ENCODE measurements at regions of chr7 and their contacts with region 1.

Region 1: GRCh38 chr7:43559171-43559936 is 23.6 kb upstream of the STK17A start:
- DNase-seq: peak; percentile 84
- H3K4me3 Mint-ChIP-seq: peak overlapping the region; percentile 8
- H3K27ac Mint-ChIP-seq: peak overlapping the region; percentile 84
- H3K4me1 Mint-ChIP-seq: peaks cover 58% of the 10 kb centered on the region
- H3K27me3 Mint-ChIP-seq: no peaks in the 10 kb centered on the region
- CTCF ChIP-seq: no peak

Region 2: GRCh38 chr7:42924223-42924838 is 635.0 kb before region 1 on chr7:
- CTCF ChIA-PET with region 1: no interaction called
- POLR2A ChIA-PET with region 1: no interaction called
- intact Hi-C with region 1: no loop called
- DNase-seq: no peak
- H3K4me3 Mint-ChIP-seq: no peak overlapping the region
- H3K27ac Mint-ChIP-seq: no peak overlapping the region
- H3K4me1 Mint-ChIP-seq: peaks cover 31% of the 10 kb centered on the region
- H3K27me3 Mint-ChIP-seq: no peaks in the 10 kb centered on the region
- CTCF ChIP-seq: no peak

Region 3: DNA sequence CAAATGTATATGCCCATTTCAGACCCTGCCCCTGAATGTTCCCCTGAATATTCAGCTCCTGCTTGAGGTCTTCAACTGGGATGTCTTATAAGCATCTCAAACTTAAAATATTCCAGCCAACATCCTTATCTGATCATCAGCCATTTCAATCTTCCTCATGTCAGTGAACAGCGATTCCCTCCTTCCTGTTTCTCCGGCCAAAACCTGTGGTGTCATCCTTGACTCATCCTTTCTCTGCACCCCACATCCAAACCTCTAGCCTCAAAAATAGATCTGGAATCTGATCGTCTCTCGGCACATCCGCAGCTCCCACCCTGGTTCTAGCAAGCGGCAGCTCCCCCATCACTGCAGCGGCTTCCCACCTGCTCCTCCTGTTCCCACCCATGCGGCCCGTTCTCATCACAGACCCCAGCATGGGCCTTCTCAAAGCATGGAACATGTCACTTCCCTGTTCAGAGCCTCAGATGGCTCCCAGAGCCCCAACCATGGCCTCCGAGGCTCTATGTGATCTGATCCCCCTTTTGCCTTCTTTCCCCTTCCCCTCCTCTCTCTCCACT is 281.2 kb before region 1 on chr7:
- CTCF ChIA-PET with region 1: no interaction called
- POLR2A ChIA-PET with region 1: no interaction called
- intact Hi-C with region 1: no loop called
- DNase-seq: peak; percentile 13
- H3K4me3 Mint-ChIP-seq: no peak overlapping the region
- H3K27ac Mint-ChIP-seq: no peak overlapping the region
- H3K4me1 Mint-ChIP-seq: peaks cover 7% of the 10 kb centered on the region
- H3K27me3 Mint-ChIP-seq: no peaks in the 10 kb centered on the region
- CTCF ChIP-seq: no peak

Region 4: DNA sequence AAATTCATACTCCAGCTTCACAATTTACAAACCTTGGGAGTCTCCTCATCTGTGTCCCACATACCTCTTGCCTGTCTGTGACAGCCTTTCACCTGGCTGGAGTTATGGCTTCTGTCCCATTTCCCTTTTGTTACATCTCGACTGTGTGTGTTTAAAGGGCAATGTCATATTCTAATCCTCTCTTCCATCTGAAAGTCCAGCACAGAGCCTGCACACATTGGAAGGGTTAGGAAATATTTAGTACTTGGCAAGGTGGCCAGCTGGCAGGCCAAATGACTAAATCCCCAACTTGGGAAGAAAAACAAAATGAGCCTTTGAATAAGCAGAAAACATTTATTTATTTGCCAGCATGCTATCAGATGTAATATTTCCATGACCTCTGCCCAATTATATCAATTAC is 96.5 kb before region 1 on chr7:
- CTCF ChIA-PET with region 1: no interaction called
- POLR2A ChIA-PET with region 1: interaction called, 14 read pairs
- intact Hi-C with region 1: no loop called
- DNase-seq: peak; percentile 68
- H3K4me3 Mint-ChIP-seq: peak overlapping the region; percentile 53
- H3K27ac Mint-ChIP-seq: peak overlapping the region; percentile 76
- H3K4me1 Mint-ChIP-seq: peaks cover 39% of the 10 kb centered on the region
- H3K27me3 Mint-ChIP-seq: no peaks in the 10 kb centered on the region
- CTCF ChIP-seq: no peak

Region 5: DNA sequence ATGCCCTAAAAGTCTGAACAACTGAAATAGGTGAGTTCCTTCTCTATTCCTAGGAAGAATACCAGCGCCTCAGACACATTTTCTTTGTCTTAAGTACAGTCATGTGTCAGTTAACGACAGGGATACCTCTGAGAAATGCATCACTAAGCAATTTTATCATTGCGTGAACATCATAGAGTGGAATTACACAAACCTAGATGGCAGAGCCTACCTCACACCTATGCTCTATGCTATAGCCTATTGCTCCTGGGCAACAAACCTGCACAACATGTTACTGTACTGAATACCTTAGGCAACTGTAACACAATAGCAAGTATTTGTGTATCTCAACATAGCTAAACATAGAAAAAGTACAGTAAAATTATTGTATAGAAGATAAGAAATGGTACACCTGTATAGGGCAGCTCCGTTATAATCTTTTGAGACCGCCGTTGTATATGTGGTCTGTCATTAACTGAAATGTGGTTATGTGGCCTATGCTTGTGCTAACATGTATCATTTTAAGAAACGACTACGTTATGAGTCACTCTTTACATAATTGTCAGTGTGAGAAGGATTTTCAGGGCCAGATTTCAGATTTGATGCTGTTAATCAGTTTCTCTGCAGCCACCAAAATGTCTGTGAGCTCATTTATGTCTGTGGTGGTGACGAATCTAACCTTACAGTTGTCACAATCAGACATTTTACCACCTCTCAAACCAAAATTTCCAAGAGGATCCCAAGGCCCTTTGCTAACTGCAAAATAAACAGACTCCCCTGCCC is 42.6 kb before region 1 on chr7:
- CTCF ChIA-PET with region 1: no interaction called
- POLR2A ChIA-PET with region 1: interaction called, 11 read pairs
- intact Hi-C with region 1: no loop called
- DNase-seq: peak; percentile 74
- H3K4me3 Mint-ChIP-seq: no peak overlapping the region
- H3K27ac Mint-ChIP-seq: no peak overlapping the region
- H3K4me1 Mint-ChIP-seq: peaks cover 5% of the 10 kb centered on the region
- H3K27me3 Mint-ChIP-seq: no peaks in the 10 kb centered on the region
- CTCF ChIP-seq: no peak

Region 6: GRCh38 chr7:43572516-43573049 is 13.2 kb after region 1 on chr7:
- CTCF ChIA-PET with region 1: interaction called, 5 read pairs
- POLR2A ChIA-PET with region 1: interaction called, 97 read pairs
- intact Hi-C with region 1: no loop called
- DNase-seq: peak; percentile 99
- H3K4me3 Mint-ChIP-seq: no peak overlapping the region
- H3K27ac Mint-ChIP-seq: peak overlapping the region; percentile 58
- H3K4me1 Mint-ChIP-seq: peaks cover 35% of the 10 kb centered on the region
- H3K27me3 Mint-ChIP-seq: no peaks in the 10 kb centered on the region
- CTCF ChIP-seq: no peak